CD8-positive, alpha-beta T cell (primary cell): ENCODE measurements at regions of chr4 and their contacts with region 1.

Region 1: DNA sequence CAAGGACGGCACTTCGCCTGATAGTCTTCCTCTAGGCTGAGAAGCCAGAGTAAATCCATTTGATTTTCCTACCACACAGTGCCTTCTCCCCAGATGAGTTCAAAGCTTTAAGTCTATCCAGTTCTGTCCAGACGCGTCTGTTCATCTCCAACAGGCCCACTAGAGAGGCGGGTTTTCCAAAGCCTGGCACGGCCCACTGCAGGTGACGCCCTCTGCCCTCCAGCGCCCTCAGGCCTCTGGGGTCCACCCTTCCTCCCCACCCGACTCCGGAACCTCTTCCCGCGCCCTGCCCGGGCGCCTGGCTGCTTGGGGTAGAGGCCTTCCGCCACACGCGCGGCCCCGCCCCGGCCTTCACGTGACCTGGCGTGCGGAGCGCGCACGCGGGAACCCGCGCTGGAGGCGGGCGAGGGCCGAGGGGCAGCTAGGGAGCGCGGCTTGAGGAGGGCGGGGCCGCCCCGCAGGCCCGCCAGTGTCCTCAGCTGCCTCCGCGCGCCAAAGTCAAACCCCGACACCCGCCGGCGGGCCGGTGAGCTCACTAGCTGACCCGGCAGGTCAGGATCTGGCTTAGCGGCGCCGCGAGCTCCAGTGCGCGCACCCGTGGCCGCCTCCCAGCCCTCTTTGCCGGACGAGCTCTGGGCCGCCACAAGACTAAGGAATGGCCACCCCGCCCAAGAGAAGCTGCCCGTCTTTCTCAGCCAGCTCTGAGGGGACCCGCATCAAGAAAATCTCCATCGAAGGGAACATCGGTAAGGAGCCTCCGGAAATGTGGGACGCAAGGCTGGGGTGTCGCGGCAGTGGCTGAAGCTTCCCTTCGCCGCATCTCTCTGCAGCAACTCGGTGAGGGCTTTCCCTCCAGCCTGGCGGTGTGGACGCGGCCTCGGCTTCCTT is at the start of gene DCK:
- DNase-seq: peak; percentile 65 to 93 (median 82)
- ATAC-seq: peak; percentile 79
- H3K4me3 ChIP-seq: peak within 1 kb of the TSS; percentile 81 to 99
- H3K4me3 Mint-ChIP-seq: peak within 1 kb of the TSS; percentile 95
- H3K27ac ChIP-seq: peak within 1 kb of the TSS; percentile 71 to 88
- H3K27ac Mint-ChIP-seq: peak within 1 kb of the TSS; percentile 94
- H3K4me1 ChIP-seq: peaks cover 29% of the 10 kb centered on the region
- H3K4me1 Mint-ChIP-seq: peaks cover 54% of the 10 kb centered on the region
- H3K27me3 ChIP-seq: no peaks in the 10 kb centered on the region
- H3K27me3 Mint-ChIP-seq: no peaks in the 10 kb centered on the region
- CTCF ChIP-seq: no peak
- total RNA-seq, gene DCK: 18.7 TPM

Region 2: GRCh38 chr4:69563424-69563823 is 1430.0 kb before region 1 on chr4:
- CTCF ChIA-PET with region 1: no interaction called
- POLR2A ChIA-PET with region 1: no interaction called
- intact Hi-C with region 1: no loop called
- DNase-seq: no peak
- ATAC-seq: no peak
- H3K4me3 ChIP-seq: no peak overlapping the region
- H3K4me3 Mint-ChIP-seq: no peak overlapping the region
- H3K27ac ChIP-seq: no peak overlapping the region
- H3K27ac Mint-ChIP-seq: no peak overlapping the region
- H3K4me1 ChIP-seq: no peaks in the 10 kb centered on the region
- H3K4me1 Mint-ChIP-seq: no peaks in the 10 kb centered on the region
- H3K27me3 ChIP-seq: no peaks in the 10 kb centered on the region
- H3K27me3 Mint-ChIP-seq: no peaks in the 10 kb centered on the region
- CTCF ChIP-seq: no peak

Region 3: DNA sequence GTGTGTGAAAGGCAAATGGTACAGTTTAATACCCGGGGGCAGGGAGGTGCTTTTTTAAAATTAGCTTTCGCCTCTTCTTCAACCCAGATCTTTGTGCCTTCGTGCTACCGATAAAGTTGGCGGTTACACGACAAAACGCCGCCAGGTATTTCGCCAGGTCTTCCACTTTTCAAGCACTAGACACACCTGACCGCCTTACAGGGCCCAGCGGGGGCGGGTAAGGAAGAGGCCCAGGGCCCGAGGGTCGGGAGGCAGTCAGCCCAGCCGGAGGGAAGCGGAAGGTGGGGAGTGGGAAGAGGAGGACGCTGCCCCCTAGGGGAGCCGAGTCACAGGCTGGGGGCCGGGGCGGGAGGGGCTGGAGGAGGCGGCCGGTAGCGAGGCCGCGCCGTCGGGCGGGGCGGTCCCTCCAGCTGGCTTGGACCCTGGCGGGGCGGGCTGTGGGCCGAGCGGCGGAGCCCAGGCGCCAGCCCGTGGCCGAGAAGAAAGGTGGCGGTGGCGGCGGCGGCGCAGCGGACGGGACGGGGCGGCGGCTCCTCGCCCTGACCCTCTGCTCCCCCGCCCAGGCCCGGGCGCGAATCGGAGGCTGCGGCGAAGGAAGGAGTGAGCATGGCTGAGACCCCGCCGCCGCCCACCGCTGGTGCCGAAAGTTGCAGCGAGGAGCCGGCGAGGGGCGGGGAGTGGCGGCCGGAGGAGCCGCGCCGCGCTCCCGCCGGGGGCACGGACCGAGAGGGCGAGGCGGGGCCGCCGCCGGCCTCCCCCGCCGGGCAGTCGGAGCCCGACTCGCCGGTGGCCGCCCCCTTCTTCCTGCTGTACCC is 288.9 kb before region 1 on chr4:
- CTCF ChIA-PET with region 1: interaction called, 3 read pairs
- POLR2A ChIA-PET with region 1: interaction called, 4 read pairs
- intact Hi-C with region 1: loop called in 1 of 2 experiments (anchors 2 kb)
- DNase-seq: peak; percentile 32 to 84 (median 62)
- ATAC-seq: peak; percentile 45
- H3K4me3 ChIP-seq: peak overlapping the region; percentile 53 to 64
- H3K4me3 Mint-ChIP-seq: peak overlapping the region; percentile 93
- H3K27ac ChIP-seq: peak overlapping the region; percentile 59 to 86
- H3K27ac Mint-ChIP-seq: peak overlapping the region; percentile 88
- H3K4me1 ChIP-seq: peaks cover 29% of the 10 kb centered on the region
- H3K4me1 Mint-ChIP-seq: peaks cover 28% of the 10 kb centered on the region
- H3K27me3 ChIP-seq: no peaks in the 10 kb centered on the region
- H3K27me3 Mint-ChIP-seq: no peaks in the 10 kb centered on the region
- CTCF ChIP-seq: no peak

Region 4: GRCh38 chr4:70831293-70831692 is 162.1 kb before region 1 on chr4:
- CTCF ChIA-PET with region 1: no interaction called
- POLR2A ChIA-PET with region 1: no interaction called
- intact Hi-C with region 1: no loop called
- DNase-seq: no peak
- ATAC-seq: no peak
- H3K4me3 ChIP-seq: no peak overlapping the region
- H3K4me3 Mint-ChIP-seq: no peak overlapping the region
- H3K27ac ChIP-seq: no peak overlapping the region
- H3K27ac Mint-ChIP-seq: no peak overlapping the region
- H3K4me1 ChIP-seq: peaks cover 9% of the 10 kb centered on the region
- H3K4me1 Mint-ChIP-seq: peaks cover 19% of the 10 kb centered on the region
- H3K27me3 ChIP-seq: no peaks in the 10 kb centered on the region
- H3K27me3 Mint-ChIP-seq: no peaks in the 10 kb centered on the region
- CTCF ChIP-seq: no peak

Region 5: GRCh38 chr4:70901984-70902576 is 91.3 kb before region 1 on chr4 and contains the start of gene MOB1B:
- CTCF ChIA-PET with region 1: no interaction called
- POLR2A ChIA-PET with region 1: no interaction called
- intact Hi-C with region 1: loop called (anchors 5 kb)
- DNase-seq: peak; percentile 62 to 90 (median 84)
- ATAC-seq: peak; percentile 95
- H3K4me3 ChIP-seq: peak within 1 kb of the TSS; percentile 86 to 88
- H3K4me3 Mint-ChIP-seq: peak within 1 kb of the TSS; percentile 99
- H3K27ac ChIP-seq: peak within 1 kb of the TSS; percentile 40 to 46
- H3K27ac Mint-ChIP-seq: peak within 1 kb of the TSS; percentile 86
- H3K4me1 ChIP-seq: peaks cover 19% of the 10 kb centered on the region
- H3K4me1 Mint-ChIP-seq: peaks cover 36% of the 10 kb centered on the region
- H3K27me3 ChIP-seq: no peaks in the 10 kb centered on the region
- H3K27me3 Mint-ChIP-seq: no peaks in the 10 kb centered on the region
- CTCF ChIP-seq: peak; percentile 39
- total RNA-seq, gene MOB1B: 9.7 to 11.1 TPM

Region 6: DNA sequence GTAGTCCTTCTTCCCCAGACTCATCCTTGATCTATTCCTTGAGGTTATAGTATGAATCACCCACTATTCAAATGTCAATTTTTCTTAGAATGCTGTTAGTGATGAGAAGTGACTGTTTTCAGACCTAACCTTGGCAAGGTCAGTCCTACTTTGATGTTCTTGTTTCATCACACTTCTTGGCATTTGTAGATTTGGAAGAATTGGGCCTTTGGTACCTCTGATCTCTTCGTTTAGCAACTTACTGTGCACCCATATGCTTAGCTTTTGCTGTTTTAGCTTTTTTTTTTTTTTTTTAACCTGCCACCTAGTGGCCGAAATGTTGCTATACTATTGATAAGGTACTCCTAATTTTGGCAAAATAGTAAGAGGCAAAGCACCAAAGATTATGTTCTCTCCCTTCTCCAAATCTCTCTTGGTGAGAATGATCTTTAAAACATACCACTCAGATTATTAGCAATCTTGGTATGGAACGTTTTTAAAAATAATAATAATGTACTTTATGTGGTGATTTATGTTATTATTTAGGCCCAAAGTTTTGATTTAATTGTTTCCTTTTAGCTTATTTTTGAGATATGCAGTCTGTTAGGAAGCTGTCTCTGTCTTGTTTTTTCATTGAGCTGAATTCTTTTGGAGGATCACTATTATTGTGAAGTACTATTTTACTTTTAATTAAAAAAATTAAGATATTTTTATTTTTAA is 16.6 kb after region 1 on chr4:
- CTCF ChIA-PET with region 1: interaction called, 70 read pairs
- POLR2A ChIA-PET with region 1: interaction called, 24 read pairs
- intact Hi-C with region 1: loop called (anchors 1 kb)
- DNase-seq: peak in 2 of 9 experiments; percentile 65 to 74
- ATAC-seq: peak; percentile 74
- H3K4me3 ChIP-seq: no peak overlapping the region
- H3K4me3 Mint-ChIP-seq: peak overlapping the region; percentile 5
- H3K27ac ChIP-seq: no peak overlapping the region
- H3K27ac Mint-ChIP-seq: peak overlapping the region; percentile 46
- H3K4me1 ChIP-seq: peaks cover 20% of the 10 kb centered on the region
- H3K4me1 Mint-ChIP-seq: peaks cover 50% of the 10 kb centered on the region
- H3K27me3 ChIP-seq: no peaks in the 10 kb centered on the region
- H3K27me3 Mint-ChIP-seq: no peaks in the 10 kb centered on the region
- CTCF ChIP-seq: peak; percentile 72

Region 7: DNA sequence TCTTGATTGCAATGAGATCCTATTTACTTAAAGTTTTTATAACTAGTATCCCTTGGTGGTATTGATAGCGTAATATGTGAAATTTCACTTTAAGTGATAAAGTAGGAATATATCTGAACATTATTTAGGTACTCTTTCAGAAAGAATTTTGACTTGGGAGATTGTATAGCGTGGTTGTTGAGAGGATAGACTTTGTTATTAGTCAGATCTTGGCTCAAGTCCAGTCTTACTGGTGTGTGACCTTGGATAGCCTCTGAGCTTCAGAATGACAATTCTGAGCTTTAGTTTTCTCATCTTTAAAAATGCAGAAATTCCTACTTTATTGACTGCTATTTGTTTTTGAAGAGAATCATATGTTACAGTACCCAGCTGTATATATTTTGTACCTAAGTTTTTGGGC is 32.7 kb after region 1 on chr4:
- CTCF ChIA-PET with region 1: no interaction called
- POLR2A ChIA-PET with region 1: interaction called, 4 read pairs
- intact Hi-C with region 1: loop called (anchors 5 kb)
- DNase-seq: no peak
- ATAC-seq: no peak
- H3K4me3 ChIP-seq: no peak overlapping the region
- H3K4me3 Mint-ChIP-seq: no peak overlapping the region
- H3K27ac ChIP-seq: no peak overlapping the region
- H3K27ac Mint-ChIP-seq: peak overlapping the region; percentile 55
- H3K4me1 ChIP-seq: no peaks in the 10 kb centered on the region
- H3K4me1 Mint-ChIP-seq: peaks cover 22% of the 10 kb centered on the region
- H3K27me3 ChIP-seq: no peaks in the 10 kb centered on the region
- H3K27me3 Mint-ChIP-seq: no peaks in the 10 kb centered on the region
- CTCF ChIP-seq: no peak